ENCODE measurements at regions of chr10 and their contacts with region 1.

Region 1: GRCh38 chr10:21495752-21496342 is 29.6 kb downstream of the SKIDA1 start:
- DNase-seq: peak; percentile 81 to 92 (median 86)
- ATAC-seq: peak; percentile 66 to 91 (median 82)
- H3K4me3 ChIP-seq: peak overlapping the region; percentile 61 to 86 (median 78)
- H3K27ac ChIP-seq: peak overlapping the region in 11 of 12 donors; percentile 68 to 91 (median 81)
- H3K4me1 ChIP-seq: peaks cover 0 to 31% (median 8%) of the 10 kb centered on the region in 12 donors
- H3K27me3 ChIP-seq: peaks cover 0 to 54% (median 0%) of the 10 kb centered on the region in 9 donors
- CTCF ChIP-seq: peak; percentile 96 to 100 (median 99)
- POLR2A ChIP-seq: no peak

Region 2: DNA sequence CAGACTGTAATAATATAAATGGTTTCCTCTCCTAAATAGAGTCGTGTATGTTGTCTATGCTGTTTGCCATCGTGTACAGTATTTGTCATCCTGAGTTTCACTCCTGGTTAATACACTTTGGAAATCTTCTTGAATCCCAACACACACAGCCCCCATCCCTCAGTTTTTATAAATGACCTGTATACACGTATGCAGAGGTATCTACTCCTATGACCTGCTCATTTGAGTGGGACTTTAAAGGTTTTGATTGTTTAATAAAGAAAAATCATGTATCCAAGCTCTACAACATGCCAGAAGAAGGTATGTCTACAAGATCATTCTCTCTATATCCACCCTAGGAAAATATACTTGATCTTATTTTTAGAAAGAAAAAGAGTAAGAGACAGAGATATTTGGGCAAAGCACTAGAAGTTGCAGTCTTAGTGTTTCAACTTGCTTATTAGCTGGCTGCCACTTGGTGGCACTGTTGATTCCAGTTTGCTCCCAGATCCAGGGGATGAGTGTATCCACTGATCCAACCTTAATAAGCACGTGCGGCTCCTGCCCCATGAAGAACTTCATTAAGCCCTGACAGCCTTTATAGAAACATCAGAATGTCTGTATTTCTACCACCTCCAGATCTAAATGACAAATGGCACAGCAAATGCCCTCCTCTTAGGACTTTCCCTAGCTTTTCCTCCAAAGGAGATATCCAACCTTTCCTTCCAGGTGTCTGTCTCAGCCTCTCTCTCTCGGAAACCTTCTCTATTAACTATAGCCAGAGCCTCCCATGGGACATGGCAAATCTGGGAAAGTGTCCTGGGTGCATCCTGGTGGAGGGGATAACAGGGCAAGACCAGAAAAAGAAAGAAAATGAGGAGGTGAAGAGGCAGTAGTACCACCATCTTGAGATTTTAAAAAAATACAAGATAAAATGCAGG is 417.2 kb before region 1 on chr10:
- intact Hi-C with region 1: loop called in 5 of 10 experiments (anchors 10 kb)
- DNase-seq: peak in 4 of 5 donors; percentile 62 to 67 (median 65)
- ATAC-seq: peak; percentile 73 to 91 (median 79)
- H3K4me3 ChIP-seq: no peak overlapping the region
- H3K27ac ChIP-seq: peak overlapping the region in 6 of 12 donors; percentile 9 to 68 (median 49)
- H3K4me1 ChIP-seq: peaks cover 0 to 11% (median 0%) of the 10 kb centered on the region in 12 donors
- H3K27me3 ChIP-seq: no peaks in the 10 kb centered on the region
- CTCF ChIP-seq: peak; percentile 60 to 88 (median 77)
- POLR2A ChIP-seq: no peak

Region 3: DNA sequence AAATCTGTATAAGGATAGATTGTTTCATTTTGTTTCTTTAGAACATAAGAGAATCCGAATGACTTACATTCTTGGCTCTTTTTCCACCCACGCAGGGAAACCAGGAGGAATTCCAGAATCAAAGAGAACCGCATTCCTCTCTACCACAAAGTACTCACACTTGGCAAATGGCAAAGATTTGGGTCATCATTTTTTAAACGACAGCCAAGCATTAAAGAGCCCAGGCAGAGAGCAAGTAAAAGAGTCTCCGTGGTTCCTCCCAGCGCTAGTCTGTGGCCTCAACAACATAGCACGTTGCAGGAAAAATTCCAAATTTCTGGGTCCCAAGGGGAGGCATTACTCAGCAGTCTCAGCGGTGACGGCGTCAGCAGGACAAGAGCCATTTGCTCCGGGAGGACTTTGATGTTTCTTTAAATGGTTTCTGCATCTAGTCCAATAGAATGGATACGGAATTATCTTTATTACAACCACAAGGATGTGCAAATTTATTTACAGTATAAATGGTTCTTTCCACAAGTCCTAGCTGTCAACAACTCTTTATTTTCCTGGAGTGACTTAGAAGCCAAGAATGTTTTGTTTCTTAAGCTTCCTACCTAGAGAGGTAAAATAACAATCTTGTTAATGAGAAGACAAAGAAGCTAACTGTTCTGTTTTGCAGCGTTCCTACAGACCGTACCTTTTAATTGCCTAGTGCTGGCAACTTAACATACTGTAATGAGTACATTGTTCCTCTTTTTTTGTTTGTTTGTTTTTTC is 202.9 kb before region 1 on chr10:
- intact Hi-C with region 1: loop called in 3 of 10 experiments (anchors 5 kb)
- DNase-seq: peak; percentile 72 to 82 (median 76)
- ATAC-seq: peak; percentile 61 to 94 (median 92)
- H3K4me3 ChIP-seq: peak overlapping the region in 9 of 12 donors; percentile 23 to 42 (median 34)
- H3K27ac ChIP-seq: peak overlapping the region in 7 of 12 donors; percentile 23 to 61 (median 35)
- H3K4me1 ChIP-seq: peaks cover 0 to 23% (median 14%) of the 10 kb centered on the region in 12 donors
- H3K27me3 ChIP-seq: peaks cover 0 to 5% (median 0%) of the 10 kb centered on the region in 9 donors
- CTCF ChIP-seq: no peak
- POLR2A ChIP-seq: no peak

Region 4: DNA sequence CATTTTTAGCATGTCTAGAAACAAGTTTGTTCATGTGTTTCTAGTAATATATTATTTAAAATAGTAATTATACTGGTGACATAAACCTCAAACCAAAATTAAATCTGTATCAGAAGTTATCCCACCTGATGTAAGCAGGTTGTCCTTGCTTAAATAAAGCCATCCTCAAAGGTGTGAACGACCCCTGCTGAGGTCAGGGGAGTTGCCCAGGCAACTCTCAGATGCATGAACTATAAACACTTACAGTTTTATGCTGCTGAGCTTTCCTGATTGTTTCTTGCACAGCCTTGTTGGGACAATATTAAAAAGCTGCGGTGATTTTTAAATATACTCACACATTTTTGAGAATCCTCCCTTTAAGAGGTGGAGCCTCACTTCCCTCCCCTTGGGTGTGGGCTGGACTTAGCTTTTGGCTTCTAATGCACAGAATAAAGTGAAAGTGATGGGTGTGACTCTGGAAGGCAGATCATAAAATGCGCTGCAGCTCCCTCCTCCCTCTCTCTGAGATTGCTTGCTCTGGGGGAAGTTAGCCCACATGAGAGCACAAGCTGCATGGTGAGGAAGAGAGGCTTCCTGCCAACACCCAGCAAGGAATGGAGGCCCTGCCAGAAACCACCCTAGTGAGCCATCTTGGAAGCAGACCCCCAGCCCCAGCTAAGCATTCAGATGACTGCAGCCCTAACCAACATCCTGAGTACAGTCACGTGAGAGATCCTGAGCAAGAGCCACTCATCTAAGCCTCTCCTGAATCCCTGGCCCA is 123.0 kb before region 1 on chr10:
- intact Hi-C with region 1: no loop called
- DNase-seq: peak in 4 of 5 donors; percentile 33 to 51 (median 44)
- ATAC-seq: peak; percentile 58 to 95 (median 94)
- H3K4me3 ChIP-seq: peak overlapping the region in 4 of 12 donors; percentile 0 to 35 (median 26)
- H3K27ac ChIP-seq: peak overlapping the region in 5 of 12 donors; percentile 13 to 75 (median 41)
- H3K4me1 ChIP-seq: peaks cover 0 to 20% (median 9%) of the 10 kb centered on the region in 12 donors
- H3K27me3 ChIP-seq: no peaks in the 10 kb centered on the region
- CTCF ChIP-seq: no peak
- POLR2A ChIP-seq: no peak

Region 5: DNA sequence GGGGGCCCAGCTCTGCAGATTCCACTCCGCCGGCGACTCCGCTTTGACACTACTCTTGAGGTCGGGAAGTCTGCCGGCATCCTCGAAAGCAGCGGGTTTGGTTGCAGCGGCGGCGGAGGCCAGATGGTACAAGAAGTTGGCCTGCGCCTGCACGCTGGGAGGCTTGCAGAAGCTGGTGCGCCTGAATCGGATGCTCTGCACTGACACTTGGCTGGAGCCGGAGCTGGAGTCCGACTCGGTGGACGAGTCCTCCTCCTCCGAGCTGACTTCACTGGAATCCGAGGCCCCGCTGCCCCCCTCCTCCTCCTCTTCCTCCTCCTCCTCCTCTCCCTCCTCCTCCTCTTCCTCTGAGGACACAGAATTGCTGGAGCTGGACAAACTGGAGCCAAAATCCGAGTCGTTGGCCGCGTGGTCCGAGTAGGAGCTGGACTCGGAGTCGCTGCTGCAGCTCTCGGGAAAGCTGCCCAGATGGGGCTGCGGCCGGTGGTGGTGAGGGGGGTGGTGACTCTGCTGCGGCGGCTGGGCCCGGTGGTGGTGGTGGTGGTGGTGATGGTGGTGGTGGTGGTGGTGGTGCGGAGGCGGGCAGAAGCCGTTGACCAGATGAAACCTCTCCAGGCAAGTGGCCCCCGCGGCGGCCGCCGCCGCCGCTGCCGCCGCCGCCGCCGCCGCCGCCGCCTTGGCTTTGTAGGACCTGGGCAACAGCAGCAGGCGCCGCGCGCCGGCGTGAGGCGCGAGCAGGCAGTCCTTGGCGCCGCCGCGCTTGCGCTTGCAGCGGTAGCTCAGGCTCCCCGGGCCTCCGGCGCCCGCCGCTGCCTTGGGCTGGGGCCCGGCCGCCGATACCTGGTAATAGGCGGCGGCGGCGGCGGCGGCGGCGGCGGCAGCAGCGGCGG is 20.6 kb after region 1 on chr10:
- intact Hi-C with region 1: loop called in 1 of 10 experiments (anchors 2 kb)
- DNase-seq: peak; percentile 56 to 83 (median 63)
- ATAC-seq: peak in 3 of 4 donors; percentile 37 to 71 (median 47)
- H3K4me3 ChIP-seq: peak overlapping the region; percentile 52 to 80 (median 70)
- H3K27ac ChIP-seq: peak overlapping the region; percentile 47 to 90 (median 84)
- H3K4me1 ChIP-seq: peaks cover 0 to 48% (median 15%) of the 10 kb centered on the region in 12 donors
- H3K27me3 ChIP-seq: peaks cover 0 to 59% (median 0%) of the 10 kb centered on the region in 9 donors
- CTCF ChIP-seq: no peak
- POLR2A ChIP-seq: no peak

Region 6: DNA sequence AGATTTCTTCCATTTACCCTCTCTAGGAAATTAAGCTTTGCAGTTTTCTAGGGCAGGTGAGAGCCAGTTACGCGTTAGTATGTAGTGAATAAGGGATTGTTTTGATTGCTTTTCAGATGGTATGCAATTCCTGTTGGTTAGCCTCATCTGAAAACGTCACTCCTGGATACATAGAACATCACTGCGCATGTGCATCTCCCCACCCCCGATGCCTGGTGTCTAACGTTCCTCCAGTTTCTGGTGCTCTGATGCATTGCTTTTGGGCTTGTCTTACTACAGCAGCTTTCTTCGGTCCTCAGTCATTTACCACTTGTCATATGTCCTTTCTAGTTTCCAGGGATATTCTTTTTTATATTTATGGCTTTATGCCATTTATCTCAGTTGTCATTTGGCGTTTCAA is 60.7 kb after region 1 on chr10:
- intact Hi-C with region 1: no loop called
- DNase-seq: no peak
- ATAC-seq: no peak
- H3K4me3 ChIP-seq: no peak overlapping the region
- H3K27ac ChIP-seq: no peak overlapping the region
- H3K4me1 ChIP-seq: peaks cover 0 to 18% (median 3%) of the 10 kb centered on the region in 12 donors
- H3K27me3 ChIP-seq: no peaks in the 10 kb centered on the region
- CTCF ChIP-seq: no peak
- POLR2A ChIP-seq: no peak

Region 7: DNA sequence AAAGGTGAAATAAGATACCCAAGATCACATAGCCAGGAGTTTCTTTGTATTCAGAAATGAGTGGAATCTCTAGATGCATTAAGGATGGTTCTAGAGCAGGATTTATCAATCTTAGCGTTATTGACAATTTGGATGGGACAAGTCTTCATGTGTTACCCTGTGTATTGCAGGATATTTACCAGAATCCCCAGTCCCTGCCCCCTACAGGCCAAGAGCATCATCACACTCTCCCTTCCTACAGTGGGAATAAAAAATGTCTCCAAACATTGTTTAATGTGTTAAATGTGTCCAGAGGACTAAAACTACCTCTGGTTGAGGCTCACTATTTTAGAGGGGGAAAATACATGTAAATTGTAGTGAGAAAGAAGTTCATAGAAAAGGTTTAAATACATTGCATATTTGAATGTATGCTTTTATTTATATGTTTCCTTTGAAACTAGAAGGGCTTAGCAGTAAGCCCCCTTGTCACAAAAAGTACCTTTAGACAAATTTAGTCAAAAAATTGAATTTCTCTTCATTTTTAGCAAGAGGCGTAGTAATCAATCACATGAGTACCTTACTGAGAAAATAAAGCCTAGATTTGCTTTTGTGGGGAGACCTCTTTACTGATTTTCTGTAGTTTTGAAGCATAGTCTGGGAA is 179.4 kb after region 1 on chr10:
- intact Hi-C with region 1: loop called in 1 of 10 experiments (anchors 5 kb)
- DNase-seq: no peak
- ATAC-seq: peak in 1 of 4 donors; percentile 36
- H3K4me3 ChIP-seq: no peak overlapping the region
- H3K27ac ChIP-seq: no peak overlapping the region
- H3K4me1 ChIP-seq: peaks cover 0 to 19% (median 5%) of the 10 kb centered on the region in 12 donors
- H3K27me3 ChIP-seq: no peaks in the 10 kb centered on the region
- CTCF ChIP-seq: peak; percentile 54 to 75 (median 68)
- POLR2A ChIP-seq: no peak

Region 8: DNA sequence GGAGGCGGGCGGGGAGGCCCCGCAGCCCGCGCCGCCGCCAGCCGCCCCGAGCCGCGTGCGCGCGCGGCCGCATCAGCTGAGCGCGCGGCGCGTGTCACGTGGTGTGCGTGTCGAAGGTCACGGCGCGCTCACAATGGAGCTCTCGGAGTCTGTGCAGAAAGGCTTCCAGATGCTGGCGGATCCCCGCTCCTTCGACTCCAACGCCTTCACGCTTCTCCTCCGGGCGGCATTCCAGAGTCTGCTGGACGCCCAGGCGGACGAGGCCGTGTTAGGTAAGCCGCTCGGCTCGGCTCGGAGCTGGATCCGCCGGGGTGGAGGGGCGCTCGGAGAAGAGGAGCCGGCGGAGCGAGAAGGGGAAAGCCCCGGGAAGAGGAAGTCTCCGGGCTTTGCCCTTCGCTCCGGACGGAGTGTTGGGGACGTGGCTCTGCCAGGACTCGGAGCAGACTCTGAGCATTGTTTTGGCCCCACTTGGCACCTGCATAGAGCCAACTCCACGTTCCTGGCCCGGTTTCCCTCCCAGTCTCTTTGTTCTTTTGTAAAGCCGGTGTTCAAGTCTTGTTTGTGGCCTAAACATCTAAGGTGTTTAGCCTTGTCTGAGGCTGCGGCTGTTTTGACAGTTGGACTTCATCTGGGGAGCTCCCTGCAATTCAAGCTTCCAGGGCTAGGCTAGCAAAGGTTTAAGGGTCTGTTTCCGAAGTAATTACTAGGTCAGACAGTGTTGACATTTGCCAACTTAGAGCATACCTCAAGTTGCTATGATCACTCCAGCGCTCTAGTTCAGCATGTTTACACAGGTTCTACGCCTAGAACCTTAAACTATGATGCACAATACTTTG is 820.7 kb after region 1 on chr10 and contains the start of gene COMMD3:
- intact Hi-C with region 1: loop called in 1 of 10 experiments (anchors 5 kb)
- DNase-seq: peak; percentile 90 to 94 (median 91)
- ATAC-seq: peak; percentile 89 to 93 (median 91)
- H3K4me3 ChIP-seq: peak within 1 kb of the TSS; percentile 66 to 85 (median 79)
- H3K27ac ChIP-seq: peak within 1 kb of the TSS; percentile 71 to 98 (median 95)
- H3K4me1 ChIP-seq: peaks cover 0 to 42% (median 28%) of the 10 kb centered on the region in 12 donors
- H3K27me3 ChIP-seq: no peaks in the 10 kb centered on the region
- CTCF ChIP-seq: no peak
- POLR2A ChIP-seq: peak in 1 of 2 donors; percentile 81
- total RNA-seq, gene COMMD3: 44.4 to 88.3 (median 74.1) TPM